Transverse colon (tissue), 4 donors: ENCODE measurements at regions of chr11 and their contacts with region 1.

Region 1: GRCh38 chr11:90512846-90513245 is 290.0 kb upstream of the CHORDC1 start:
- DNase-seq: no peak
- H3K4me3 ChIP-seq: no peak overlapping the region
- H3K27ac ChIP-seq: no peak overlapping the region
- H3K4me1 ChIP-seq: no peaks in the 10 kb centered on the region
- H3K27me3 ChIP-seq: no peaks in the 10 kb centered on the region
- CTCF ChIP-seq: no peak
- EP300 ChIP-seq: no peak
- POLR2A ChIP-seq: no peak

Region 2: GRCh38 chr11:90525962-90526361 is 13.1 kb after region 1 on chr11:
- in situ Hi-C with region 1: no loop called
- intact Hi-C with region 1: loop called (anchors 1 kb)
- DNase-seq: no peak
- H3K4me3 ChIP-seq: no peak overlapping the region
- H3K27ac ChIP-seq: no peak overlapping the region
- H3K4me1 ChIP-seq: no peaks in the 10 kb centered on the region
- H3K27me3 ChIP-seq: no peaks in the 10 kb centered on the region
- CTCF ChIP-seq: no peak
- EP300 ChIP-seq: no peak
- POLR2A ChIP-seq: no peak

Region 3: DNA sequence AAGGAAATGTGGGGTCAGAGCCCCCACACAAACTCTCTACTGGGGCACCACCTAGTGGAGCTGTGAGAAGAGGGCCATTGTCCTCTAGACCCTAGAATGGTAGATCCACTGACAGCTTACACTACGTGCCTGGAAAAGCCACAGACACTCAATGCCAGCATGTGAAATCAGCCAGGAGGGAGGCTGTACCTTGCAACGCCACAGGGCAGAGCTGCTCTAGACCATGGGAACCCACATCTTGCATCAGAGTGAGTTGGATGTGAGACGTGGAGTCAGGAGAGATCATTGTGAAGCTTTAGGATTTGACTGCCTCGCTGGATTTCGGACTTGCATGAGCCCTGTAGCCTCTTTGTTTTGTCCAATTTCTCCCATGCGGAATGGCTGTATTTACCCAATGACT is 163.1 kb after region 1 on chr11:
- in situ Hi-C with region 1: no loop called
- intact Hi-C with region 1: no loop called
- DNase-seq: no peak
- H3K4me3 ChIP-seq: no peak overlapping the region
- H3K27ac ChIP-seq: no peak overlapping the region
- H3K4me1 ChIP-seq: no peaks in the 10 kb centered on the region
- H3K27me3 ChIP-seq: no peaks in the 10 kb centered on the region
- CTCF ChIP-seq: no peak
- EP300 ChIP-seq: no peak
- POLR2A ChIP-seq: no peak